Activated CD8-positive, alpha-beta T cell treated with anti-CD3 and anti-CD28 coated beads for 36 hours (primary cell): ENCODE measurements at regions of chr4 and their contacts with region 1.

Region 1: DNA sequence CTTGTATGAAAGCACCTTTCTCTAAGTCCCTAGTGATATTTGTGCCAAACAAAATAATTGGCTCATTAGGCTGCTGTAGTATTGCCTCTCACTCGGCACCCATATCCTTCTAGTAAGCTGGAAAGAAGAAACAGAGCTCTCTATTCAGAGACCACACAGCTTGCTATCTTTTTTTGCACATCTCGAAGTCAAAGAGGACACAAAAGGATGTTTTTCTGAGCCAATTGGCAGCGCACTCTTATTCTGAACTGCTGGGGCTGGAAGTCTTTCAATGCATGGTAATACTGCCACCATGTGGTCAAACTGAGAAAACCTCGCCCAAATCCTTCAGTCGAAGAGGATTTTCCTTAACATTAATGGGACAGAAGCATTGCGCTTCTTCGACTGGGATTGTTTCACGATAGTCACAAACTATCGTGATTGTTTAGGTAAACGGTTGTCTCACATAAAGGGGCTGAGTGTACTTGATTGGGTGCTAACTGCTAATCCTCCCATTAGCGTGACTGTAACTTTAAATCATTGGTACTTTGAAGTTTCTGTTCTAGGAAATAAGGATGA is 572.0 kb upstream of the LCORL start:
- DNase-seq: peak; percentile 46
- ATAC-seq: peak; percentile 51
- H3K4me3 Mint-ChIP-seq: no peak overlapping the region
- H3K27ac Mint-ChIP-seq: no peak overlapping the region
- H3K4me1 Mint-ChIP-seq: peaks cover 5% of the 10 kb centered on the region
- H3K27me3 Mint-ChIP-seq: peaks cover 15% of the 10 kb centered on the region
- CTCF ChIP-seq: peak; percentile 82

Region 2: GRCh38 chr4:17817020-17817419 is 776.5 kb before region 1 on chr4:
- CTCF ChIA-PET with region 1: interaction called, 10 read pairs
- POLR2A ChIA-PET with region 1: no interaction called
- intact Hi-C with region 1: loop called (anchors 5 kb)
- DNase-seq: no peak
- ATAC-seq: peak; percentile 72
- H3K4me3 Mint-ChIP-seq: no peak overlapping the region
- H3K27ac Mint-ChIP-seq: no peak overlapping the region
- H3K4me1 Mint-ChIP-seq: peaks cover 12% of the 10 kb centered on the region
- H3K27me3 Mint-ChIP-seq: peaks cover 2% of the 10 kb centered on the region
- CTCF ChIP-seq: peak; percentile 48

Region 3: GRCh38 chr4:18636001-18636585 is 42.6 kb after region 1 on chr4:
- CTCF ChIA-PET with region 1: no interaction called
- POLR2A ChIA-PET with region 1: no interaction called
- intact Hi-C with region 1: no loop called
- DNase-seq: no peak
- ATAC-seq: no peak
- H3K4me3 Mint-ChIP-seq: no peak overlapping the region
- H3K27ac Mint-ChIP-seq: no peak overlapping the region
- H3K4me1 Mint-ChIP-seq: no peaks in the 10 kb centered on the region
- H3K27me3 Mint-ChIP-seq: peaks cover 2% of the 10 kb centered on the region
- CTCF ChIP-seq: no peak

Region 4: GRCh38 chr4:18777190-18777589 is 183.7 kb after region 1 on chr4:
- CTCF ChIA-PET with region 1: no interaction called
- POLR2A ChIA-PET with region 1: no interaction called
- intact Hi-C with region 1: no loop called
- DNase-seq: no peak
- ATAC-seq: no peak
- H3K4me3 Mint-ChIP-seq: no peak overlapping the region
- H3K27ac Mint-ChIP-seq: no peak overlapping the region
- H3K4me1 Mint-ChIP-seq: no peaks in the 10 kb centered on the region
- H3K27me3 Mint-ChIP-seq: no peaks in the 10 kb centered on the region
- CTCF ChIP-seq: no peak

Region 5: DNA sequence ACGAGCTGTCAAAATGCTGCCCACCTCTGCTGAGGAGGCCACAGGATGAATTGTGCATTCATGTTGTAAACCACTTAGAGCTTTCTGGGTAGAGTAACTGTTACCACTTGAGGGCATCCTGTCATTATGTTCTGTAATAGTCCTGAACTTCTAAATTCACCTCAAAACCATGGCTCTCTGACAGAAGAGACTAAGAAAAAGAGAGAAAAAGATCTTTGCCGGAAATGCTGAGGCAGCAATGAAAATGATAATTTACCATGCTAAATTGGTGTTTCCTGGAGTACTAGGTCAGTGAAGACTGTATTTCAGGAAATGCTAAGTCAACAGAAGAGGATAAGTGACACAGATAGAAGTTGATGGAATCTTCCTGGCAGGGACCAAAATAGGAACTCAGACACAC is 715.9 kb after region 1 on chr4:
- CTCF ChIA-PET with region 1: no interaction called
- POLR2A ChIA-PET with region 1: no interaction called
- intact Hi-C with region 1: no loop called
- DNase-seq: no peak
- ATAC-seq: no peak
- H3K4me3 Mint-ChIP-seq: no peak overlapping the region
- H3K27ac Mint-ChIP-seq: no peak overlapping the region
- H3K4me1 Mint-ChIP-seq: no peaks in the 10 kb centered on the region
- H3K27me3 Mint-ChIP-seq: no peaks in the 10 kb centered on the region
- CTCF ChIP-seq: no peak